CD4-positive, alpha-beta memory T cell (primary cell): ENCODE measurements at regions of chr19 and their contacts with region 1.

Region 1: GRCh38 chr19:8697671-8698432 is 743 bp downstream of the ACTL9 start:
- DNase-seq: no peak
- H3K4me3 ChIP-seq: no peak overlapping the region
- H3K4me3 Mint-ChIP-seq: no peak overlapping the region
- H3K27ac ChIP-seq: no peak overlapping the region
- H3K27ac Mint-ChIP-seq: no peak overlapping the region
- H3K4me1 ChIP-seq: peaks cover 50% of the 10 kb centered on the region
- H3K4me1 Mint-ChIP-seq: peaks cover 26 to 62% (median 45%) of the 10 kb centered on the region in 4 donors
- H3K27me3 ChIP-seq: no peaks in the 10 kb centered on the region
- H3K27me3 Mint-ChIP-seq: no peaks in the 10 kb centered on the region

Region 2: DNA sequence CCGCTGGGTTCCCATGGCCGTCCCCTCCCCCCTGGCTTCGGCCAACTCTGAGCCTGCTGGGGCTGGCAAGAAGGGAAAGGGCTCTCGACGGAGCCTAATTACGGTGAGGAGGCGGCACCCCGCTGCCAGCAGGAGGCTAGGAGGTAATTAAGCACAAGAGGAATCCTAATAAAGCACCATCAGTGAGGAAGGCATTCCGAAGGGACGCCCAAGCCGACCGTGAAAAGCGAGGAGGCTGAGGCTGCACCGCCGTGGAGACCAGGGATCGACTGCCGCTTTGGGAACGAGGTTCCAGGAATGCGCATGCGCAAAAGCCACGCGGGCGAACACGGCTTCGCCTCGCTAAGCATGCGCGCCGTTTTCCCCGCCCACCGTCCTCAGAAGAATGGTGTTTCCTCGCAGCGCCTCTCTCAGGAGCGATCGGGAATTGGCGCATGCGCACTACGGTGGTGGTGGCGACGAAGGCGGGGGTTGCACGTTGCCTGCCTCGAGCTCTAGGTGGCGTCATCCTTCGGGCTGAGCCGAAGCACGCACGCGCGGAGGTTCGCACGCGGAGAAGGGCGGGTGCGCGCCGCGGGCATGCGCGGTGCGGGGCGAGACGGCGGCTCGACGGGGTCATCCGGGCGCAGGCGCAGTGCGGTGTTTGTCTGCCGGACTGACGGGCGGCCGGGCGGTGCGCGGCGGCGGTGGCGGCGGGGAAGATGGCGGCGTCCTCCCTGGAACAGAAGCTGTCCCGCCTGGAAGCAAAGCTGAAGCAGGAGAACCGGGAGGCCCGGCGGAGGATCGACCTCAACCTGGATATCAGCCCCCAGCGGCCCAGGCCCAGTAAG is 794.4 kb before region 1 on chr19 and contains the start of gene MAP2K7:
- CTCF ChIA-PET with region 1: no interaction called
- POLR2A ChIA-PET with region 1: no interaction called
- intact Hi-C with region 1: no loop called
- DNase-seq: peak; percentile 100
- H3K4me3 ChIP-seq: peak within 1 kb of the TSS; percentile 61 to 96
- H3K4me3 Mint-ChIP-seq: peak within 1 kb of the TSS; percentile 88 to 99 (median 90)
- H3K27ac ChIP-seq: peak within 1 kb of the TSS; percentile 83
- H3K27ac Mint-ChIP-seq: peak within 1 kb of the TSS; percentile 94 to 100 (median 97)
- H3K4me1 ChIP-seq: peaks cover 32% of the 10 kb centered on the region
- H3K4me1 Mint-ChIP-seq: peaks cover 15 to 37% (median 26%) of the 10 kb centered on the region in 4 donors
- H3K27me3 ChIP-seq: no peaks in the 10 kb centered on the region
- H3K27me3 Mint-ChIP-seq: peaks cover 2 to 5% of the 10 kb centered on the region in 2 donors
- total RNA-seq, gene MAP2K7: 59.7 to 62.5 TPM

Region 3: GRCh38 chr19:8174706-8175105 is 523.1 kb before region 1 on chr19:
- CTCF ChIA-PET with region 1: no interaction called
- POLR2A ChIA-PET with region 1: no interaction called
- intact Hi-C with region 1: no loop called
- DNase-seq: no peak
- H3K4me3 ChIP-seq: no peak overlapping the region
- H3K4me3 Mint-ChIP-seq: no peak overlapping the region
- H3K27ac ChIP-seq: no peak overlapping the region
- H3K27ac Mint-ChIP-seq: no peak overlapping the region
- H3K4me1 ChIP-seq: no peaks in the 10 kb centered on the region
- H3K4me1 Mint-ChIP-seq: no peaks in the 10 kb centered on the region
- H3K27me3 ChIP-seq: no peaks in the 10 kb centered on the region
- H3K27me3 Mint-ChIP-seq: no peaks in the 10 kb centered on the region

Region 4: DNA sequence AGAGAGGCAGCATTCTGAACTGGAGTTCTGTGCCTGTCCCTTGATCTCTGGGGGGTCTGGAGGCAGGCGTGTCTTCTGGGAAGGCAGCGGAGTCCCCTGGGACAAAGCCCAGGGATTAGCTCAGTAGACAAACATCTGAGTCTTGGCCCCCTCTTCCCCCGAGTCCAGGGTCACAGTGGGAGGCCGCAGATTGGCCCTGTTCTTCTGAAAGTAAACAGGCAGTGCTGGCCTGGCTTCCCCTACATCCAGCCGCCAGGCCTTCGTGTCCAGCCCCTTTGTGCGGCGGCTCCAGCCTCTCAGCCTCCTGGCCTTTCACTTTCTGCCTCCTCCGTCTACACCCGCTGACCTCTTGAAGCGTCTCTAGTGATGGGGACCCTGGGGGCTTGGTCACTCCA is 66.4 kb before region 1 on chr19:
- CTCF ChIA-PET with region 1: no interaction called
- POLR2A ChIA-PET with region 1: no interaction called
- intact Hi-C with region 1: no loop called
- DNase-seq: no peak
- H3K4me3 ChIP-seq: no peak overlapping the region
- H3K4me3 Mint-ChIP-seq: no peak overlapping the region
- H3K27ac ChIP-seq: no peak overlapping the region
- H3K27ac Mint-ChIP-seq: no peak overlapping the region
- H3K4me1 ChIP-seq: no peaks in the 10 kb centered on the region
- H3K4me1 Mint-ChIP-seq: peaks cover 0 to 8% (median 2%) of the 10 kb centered on the region in 4 donors
- H3K27me3 ChIP-seq: no peaks in the 10 kb centered on the region
- H3K27me3 Mint-ChIP-seq: peaks cover 0 to 3% of the 10 kb centered on the region in 2 donors

Region 5: GRCh38 chr19:8663920-8664670 is 33.8 kb before region 1 on chr19:
- CTCF ChIA-PET with region 1: interaction called, 140 read pairs
- POLR2A ChIA-PET with region 1: no interaction called
- intact Hi-C with region 1: no loop called
- DNase-seq: peak in 4 of 5 donors; percentile 14 to 35 (median 24)
- H3K4me3 ChIP-seq: peak overlapping the region; percentile 37 to 47
- H3K4me3 Mint-ChIP-seq: peak overlapping the region; percentile 27 to 82 (median 70)
- H3K27ac ChIP-seq: no peak overlapping the region
- H3K27ac Mint-ChIP-seq: peak overlapping the region; percentile 34 to 93 (median 63)
- H3K4me1 ChIP-seq: peaks cover 39% of the 10 kb centered on the region
- H3K4me1 Mint-ChIP-seq: peaks cover 20 to 64% (median 36%) of the 10 kb centered on the region in 4 donors
- H3K27me3 ChIP-seq: no peaks in the 10 kb centered on the region
- H3K27me3 Mint-ChIP-seq: no peaks in the 10 kb centered on the region

Region 6: GRCh38 chr19:8684001-8684902 is 13.6 kb before region 1 on chr19:
- CTCF ChIA-PET with region 1: interaction called, 12 read pairs
- POLR2A ChIA-PET with region 1: no interaction called
- intact Hi-C with region 1: no loop called
- DNase-seq: no peak
- H3K4me3 ChIP-seq: no peak overlapping the region
- H3K4me3 Mint-ChIP-seq: no peak overlapping the region
- H3K27ac ChIP-seq: no peak overlapping the region
- H3K27ac Mint-ChIP-seq: peak overlapping the region in 1 of 7 donors; percentile 8
- H3K4me1 ChIP-seq: peaks cover 4% of the 10 kb centered on the region
- H3K4me1 Mint-ChIP-seq: peaks cover 5 to 33% (median 17%) of the 10 kb centered on the region in 4 donors
- H3K27me3 ChIP-seq: no peaks in the 10 kb centered on the region
- H3K27me3 Mint-ChIP-seq: peaks cover 0 to 2% of the 10 kb centered on the region in 2 donors